K562 (cell line): ENCODE measurements at regions of chr7 and their contacts with region 1.

Region 1: GRCh38 chr7:33757562-33758165 is 147.7 kb upstream of the BMPER start:
- DNase-seq: peak; percentile 22 to 47 (median 42)
- ATAC-seq: no peak
- H3K4me3 ChIP-seq: no peak overlapping the region
- H3K27ac ChIP-seq: no peak overlapping the region
- H3K4me1 ChIP-seq: no peaks in the 10 kb centered on the region
- H3K27me3 ChIP-seq: no peaks in the 10 kb centered on the region; a peak in 1 of 5 replicates
- CTCF ChIP-seq: peak in 2 of 3 experiments; percentile 23 to 55; a peak in 4 of 6 replicates
- EP300 ChIP-seq: no peak
- POLR2A ChIP-seq: no peak
- RAD21 ChIP-seq: peak in 1 of 2 experiments; percentile 45; a peak in 3 of 4 replicates

Region 2: GRCh38 chr7:33807779-33808482 is 50.3 kb after region 1 on chr7:
- CTCF ChIA-PET with region 1: no interaction called
- POLR2A ChIA-PET with region 1: no interaction called
- in situ Hi-C with region 1: no loop called
- intact Hi-C with region 1: loop called (anchors 5 kb)
- DNase-seq: peak; percentile 22 to 35 (median 26)
- ATAC-seq: peak; percentile 86
- H3K4me3 ChIP-seq: no peak overlapping the region
- H3K27ac ChIP-seq: no peak overlapping the region
- H3K4me1 ChIP-seq: no peaks in the 10 kb centered on the region
- H3K27me3 ChIP-seq: no peaks in the 10 kb centered on the region
- CTCF ChIP-seq: peak; percentile 64 to 88 (median 69)
- EP300 ChIP-seq: no peak
- POLR2A ChIP-seq: no peak
- RAD21 ChIP-seq: peak in 1 of 2 experiments; percentile 41; a peak in 2 of 4 replicates

Region 3: DNA sequence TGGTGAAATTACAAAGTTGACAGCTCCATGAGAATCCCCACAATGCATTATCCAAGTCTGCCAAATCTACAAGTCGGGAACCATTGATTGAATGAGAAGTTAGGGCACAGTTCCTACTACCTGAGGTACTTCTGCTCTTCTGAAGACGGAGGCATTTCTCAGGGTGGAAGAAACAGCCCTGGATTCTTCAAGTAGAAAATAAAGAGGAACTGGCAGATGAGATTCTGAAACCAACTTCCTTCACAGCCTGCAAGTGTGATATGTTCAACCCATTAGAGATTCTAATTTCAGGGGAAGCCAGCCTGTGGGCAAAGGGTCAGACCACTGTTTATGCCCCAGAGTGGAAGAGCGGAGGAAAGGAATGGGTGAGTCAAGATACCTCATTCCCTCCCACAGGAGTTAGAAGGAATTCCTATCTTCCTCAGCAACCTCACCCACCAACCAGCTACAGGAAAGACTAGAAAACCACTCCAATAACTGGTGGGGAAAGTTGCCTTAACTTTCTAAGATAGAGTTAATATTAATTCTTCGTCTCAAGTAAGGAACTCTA is 97.2 kb after region 1 on chr7:
- CTCF ChIA-PET with region 1: no interaction called
- POLR2A ChIA-PET with region 1: no interaction called
- in situ Hi-C with region 1: no loop called
- intact Hi-C with region 1: no loop called
- DNase-seq: no peak
- ATAC-seq: no peak
- H3K4me3 ChIP-seq: no peak overlapping the region
- H3K27ac ChIP-seq: no peak overlapping the region
- H3K4me1 ChIP-seq: no peaks in the 10 kb centered on the region
- H3K27me3 ChIP-seq: no peaks in the 10 kb centered on the region
- CTCF ChIP-seq: no peak
- EP300 ChIP-seq: no peak
- POLR2A ChIP-seq: no peak
- RAD21 ChIP-seq: no peak

Region 4: GRCh38 chr7:33895025-33895804 is 137.6 kb after region 1 on chr7:
- CTCF ChIA-PET with region 1: no interaction called
- POLR2A ChIA-PET with region 1: no interaction called
- in situ Hi-C with region 1: no loop called
- intact Hi-C with region 1: loop called (anchors 2 kb)
- DNase-seq: peak; percentile 55 to 69 (median 62)
- ATAC-seq: peak; percentile 98
- H3K4me3 ChIP-seq: no peak overlapping the region
- H3K27ac ChIP-seq: no peak overlapping the region
- H3K4me1 ChIP-seq: no peaks in the 10 kb centered on the region
- H3K27me3 ChIP-seq: no peaks in the 10 kb centered on the region
- CTCF ChIP-seq: peak; percentile 67 to 78 (median 76)
- EP300 ChIP-seq: no peak
- POLR2A ChIP-seq: no peak
- RAD21 ChIP-seq: peak in 1 of 2 experiments; percentile 38; a peak in 3 of 4 replicates